ENCODE measurements at regions of chr19 and their contacts with region 1.

Region 1: DNA sequence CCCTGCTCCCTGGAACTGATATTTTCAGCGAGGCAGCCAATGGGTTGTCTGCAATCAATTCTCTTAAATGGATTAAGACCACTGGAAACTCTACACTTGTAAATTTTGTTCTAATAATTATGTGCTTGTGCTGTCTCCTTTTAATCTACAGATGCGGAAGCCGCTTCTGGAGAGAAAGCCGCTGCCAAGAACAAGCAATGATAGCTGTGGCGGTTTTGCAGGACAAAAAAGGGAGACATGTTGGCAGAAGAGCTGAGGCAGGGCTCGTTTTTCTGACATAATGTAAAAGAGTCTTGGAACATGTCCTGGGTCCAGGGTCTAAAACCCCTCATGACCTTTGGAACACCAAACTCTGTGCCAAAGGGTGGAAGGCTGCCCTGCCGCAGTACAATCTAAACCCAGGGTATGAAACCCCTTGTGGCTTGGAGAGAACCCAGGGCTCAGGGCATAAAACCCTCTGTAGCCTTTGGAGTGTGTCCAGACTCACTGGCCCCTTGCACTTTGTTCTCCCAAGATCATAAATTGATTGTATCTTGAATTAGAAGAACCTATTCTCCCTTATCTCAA is 12.7 kb downstream of the ZNF417 start:
- DNase-seq: no peak
- ATAC-seq: no peak
- H3K4me3 ChIP-seq: no peak overlapping the region
- H3K27ac ChIP-seq: no peak overlapping the region
- H3K4me1 ChIP-seq: no peaks in the 10 kb centered on the region
- H3K27me3 ChIP-seq: no peaks in the 10 kb centered on the region
- CTCF ChIP-seq: no peak
- POLR2A ChIP-seq: no peak
- RAD21 ChIP-seq: no peak

Region 2: DNA sequence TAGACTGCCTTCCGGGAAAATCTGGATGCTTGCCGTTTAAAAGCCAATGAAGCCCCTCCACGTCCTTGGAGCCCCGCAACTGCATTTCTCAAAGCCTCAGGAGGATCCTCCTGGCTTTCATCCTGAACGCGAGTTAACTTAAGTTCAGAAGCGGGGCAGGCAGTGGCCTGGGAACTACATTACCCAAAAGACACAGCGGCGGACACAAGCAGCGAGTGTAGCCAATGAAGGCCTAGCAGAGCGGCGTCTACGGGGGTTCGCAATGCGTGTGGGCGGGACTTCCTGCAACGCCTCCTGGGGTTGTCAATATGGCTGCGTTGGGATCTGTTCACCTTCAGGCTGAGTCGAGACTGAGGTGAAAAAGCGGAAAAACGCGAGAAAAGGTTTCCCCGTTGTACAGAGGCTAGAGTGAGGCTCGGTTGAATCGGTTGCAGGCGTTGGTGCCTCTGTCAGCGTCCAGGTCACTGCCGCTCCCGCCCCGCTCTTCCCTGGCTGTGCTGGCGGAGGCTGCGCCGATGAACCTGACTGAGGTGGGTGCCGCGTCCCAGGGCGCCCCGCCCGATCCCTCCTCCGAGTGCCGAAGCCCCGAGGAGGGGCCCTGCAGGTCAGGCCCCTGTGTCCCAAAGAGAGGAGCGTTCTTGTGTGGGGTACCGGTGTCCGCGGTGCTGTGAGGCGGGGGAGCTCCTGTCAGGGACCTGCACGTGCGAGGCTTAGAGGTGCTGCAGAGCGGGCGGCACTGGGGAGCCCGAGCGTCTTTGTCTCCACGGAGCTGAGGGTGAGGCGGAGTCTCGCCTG is 492.6 kb before region 1 on chr19 and contains the start of gene ZNF17:
- CTCF ChIA-PET with region 1: no interaction called
- POLR2A ChIA-PET with region 1: no interaction called
- RAD21 ChIA-PET with region 1: no interaction called
- intact Hi-C with region 1: loop called (anchors 10 kb)
- DNase-seq: peak; percentile 87
- ATAC-seq: peak; percentile 99
- H3K4me3 ChIP-seq: peak within 1 kb of the TSS; percentile 75 to 100
- H3K27ac ChIP-seq: peak within 1 kb of the TSS; percentile 35
- H3K4me1 ChIP-seq: peaks cover 4 to 11% of the 10 kb centered on the region in 2 experiments; a peak in 2 of 4 replicates
- H3K27me3 ChIP-seq: no peaks in the 10 kb centered on the region
- CTCF ChIP-seq: no peak
- POLR2A ChIP-seq: peak; percentile 46
- RAD21 ChIP-seq: no peak
- total RNA-seq, gene ZNF17: 5.1 TPM

Region 3: DNA sequence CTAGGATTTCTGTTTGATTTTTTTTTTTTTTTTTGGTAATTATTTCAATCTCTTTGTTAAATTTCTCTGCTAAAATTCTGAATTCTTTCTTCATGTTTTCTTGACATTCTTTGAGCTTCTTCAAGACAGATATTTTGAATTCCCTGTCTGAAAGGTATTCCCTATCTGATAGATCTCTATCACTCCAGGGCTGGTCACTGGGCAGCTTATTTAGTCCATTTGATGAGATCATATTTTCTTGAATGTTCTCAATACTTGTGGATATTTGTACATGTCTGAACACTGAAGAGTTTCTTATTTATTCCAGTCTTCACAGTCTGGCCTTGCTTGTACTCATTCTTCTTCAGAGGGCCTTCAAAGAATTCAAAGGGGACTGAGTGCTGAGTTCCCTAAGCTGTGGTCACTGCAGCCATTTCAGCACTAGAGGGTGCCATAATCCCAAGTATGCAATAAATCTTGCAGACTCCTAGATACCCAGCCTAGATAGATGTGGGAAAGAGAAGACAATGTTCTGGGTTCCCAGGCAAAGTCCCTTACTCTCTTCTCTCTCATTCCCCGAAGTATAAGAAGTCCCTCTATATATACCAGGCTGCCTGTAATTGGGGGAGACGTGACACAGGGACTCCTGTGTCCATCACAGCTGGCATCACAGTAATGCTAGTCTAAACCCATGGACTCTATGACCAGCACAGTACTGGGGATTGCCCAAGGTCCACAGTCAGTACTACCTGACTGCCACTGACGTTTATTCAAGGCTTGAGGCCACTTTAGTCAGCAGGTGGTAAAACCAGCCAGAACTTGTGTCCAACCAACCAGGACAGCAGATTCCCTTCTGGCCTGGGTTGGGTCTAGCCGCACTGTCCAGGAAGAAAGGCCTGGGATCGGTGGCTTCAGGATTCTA is 438.0 kb before region 1 on chr19:
- CTCF ChIA-PET with region 1: no interaction called
- POLR2A ChIA-PET with region 1: no interaction called
- RAD21 ChIA-PET with region 1: no interaction called
- intact Hi-C with region 1: loop called (anchors 5 kb)
- DNase-seq: peak; percentile 59
- ATAC-seq: peak; percentile 92
- H3K4me3 ChIP-seq: no peak overlapping the region
- H3K27ac ChIP-seq: no peak overlapping the region
- H3K4me1 ChIP-seq: no peaks in the 10 kb centered on the region
- H3K27me3 ChIP-seq: no peaks in the 10 kb centered on the region
- CTCF ChIP-seq: peak; percentile 27 to 71 (median 65); a peak in 5 of 6 replicates
- POLR2A ChIP-seq: no peak
- RAD21 ChIP-seq: peak; percentile 75

Region 4: GRCh38 chr19:57830071-57830602 is 73.6 kb before region 1 on chr19 and contains the start of gene ZNF587B:
- CTCF ChIA-PET with region 1: no interaction called
- POLR2A ChIA-PET with region 1: no interaction called
- RAD21 ChIA-PET with region 1: no interaction called
- intact Hi-C with region 1: no loop called
- DNase-seq: peak; percentile 36
- ATAC-seq: peak; percentile 88
- H3K4me3 ChIP-seq: peak within 1 kb of the TSS; percentile 10 to 24; a peak in 3 of 4 replicates
- H3K27ac ChIP-seq: 0 out of 2 replicates have a peak within 1 kb of the TSS, but pooled peaks have one; percentile 26
- H3K4me1 ChIP-seq: peaks cover 0 to 8% of the 10 kb centered on the region in 2 experiments; a peak in 2 of 4 replicates
- H3K27me3 ChIP-seq: no peaks in the 10 kb centered on the region
- CTCF ChIP-seq: peak in 2 of 3 experiments; percentile 31 to 60; a peak in 3 of 6 replicates
- POLR2A ChIP-seq: no peak
- RAD21 ChIP-seq: no peak; the same call in 1 of the 2 replicates
- total RNA-seq, gene ZNF587B: 14.1 TPM

Measured in HCT116 (cell line).